CD14-positive monocyte (primary cell): ENCODE measurements at regions of chrX and their contacts with region 1.

Region 1: GRCh38 chrX:150898343-150899190 is at the start of gene CD99L2:
- DNase-seq: peak; percentile 77 to 82 (median 82)
- H3K4me3 ChIP-seq: peak within 1 kb of the TSS; percentile 66 to 91 (median 82)
- H3K4me3 Mint-ChIP-seq: peak within 1 kb of the TSS; percentile 88 to 91
- H3K27ac ChIP-seq: peak within 1 kb of the TSS; percentile 75 to 87
- H3K27ac Mint-ChIP-seq: peak within 1 kb of the TSS; percentile 81 to 93 (median 85)
- H3K4me1 ChIP-seq: peaks cover 8 to 27% of the 10 kb centered on the region in 2 donors
- H3K4me1 Mint-ChIP-seq: peaks cover 17% of the 10 kb centered on the region
- H3K27me3 ChIP-seq: no peaks in the 10 kb centered on the region
- H3K27me3 Mint-ChIP-seq: peaks cover 0 to 8% (median 0%) of the 10 kb centered on the region in 3 donors
- CTCF ChIP-seq: no peak
- polyA plus RNA-seq, gene CD99L2: 13.1 to 18.4 (median 16.7) TPM

Region 2: GRCh38 chrX:150781677-150782076 is 116.9 kb before region 1 on chrX:
- intact Hi-C with region 1: loop called in 1 of 2 experiments (anchors 10 kb)
- DNase-seq: no peak
- H3K4me3 ChIP-seq: no peak overlapping the region
- H3K4me3 Mint-ChIP-seq: no peak overlapping the region
- H3K27ac ChIP-seq: no peak overlapping the region
- H3K27ac Mint-ChIP-seq: no peak overlapping the region
- H3K4me1 ChIP-seq: peaks cover 0 to 3% of the 10 kb centered on the region in 2 donors
- H3K4me1 Mint-ChIP-seq: peaks cover 18% of the 10 kb centered on the region
- H3K27me3 ChIP-seq: no peaks in the 10 kb centered on the region
- H3K27me3 Mint-ChIP-seq: peaks cover 0 to 1% (median 0%) of the 10 kb centered on the region in 3 donors
- CTCF ChIP-seq: no peak

Region 3: DNA sequence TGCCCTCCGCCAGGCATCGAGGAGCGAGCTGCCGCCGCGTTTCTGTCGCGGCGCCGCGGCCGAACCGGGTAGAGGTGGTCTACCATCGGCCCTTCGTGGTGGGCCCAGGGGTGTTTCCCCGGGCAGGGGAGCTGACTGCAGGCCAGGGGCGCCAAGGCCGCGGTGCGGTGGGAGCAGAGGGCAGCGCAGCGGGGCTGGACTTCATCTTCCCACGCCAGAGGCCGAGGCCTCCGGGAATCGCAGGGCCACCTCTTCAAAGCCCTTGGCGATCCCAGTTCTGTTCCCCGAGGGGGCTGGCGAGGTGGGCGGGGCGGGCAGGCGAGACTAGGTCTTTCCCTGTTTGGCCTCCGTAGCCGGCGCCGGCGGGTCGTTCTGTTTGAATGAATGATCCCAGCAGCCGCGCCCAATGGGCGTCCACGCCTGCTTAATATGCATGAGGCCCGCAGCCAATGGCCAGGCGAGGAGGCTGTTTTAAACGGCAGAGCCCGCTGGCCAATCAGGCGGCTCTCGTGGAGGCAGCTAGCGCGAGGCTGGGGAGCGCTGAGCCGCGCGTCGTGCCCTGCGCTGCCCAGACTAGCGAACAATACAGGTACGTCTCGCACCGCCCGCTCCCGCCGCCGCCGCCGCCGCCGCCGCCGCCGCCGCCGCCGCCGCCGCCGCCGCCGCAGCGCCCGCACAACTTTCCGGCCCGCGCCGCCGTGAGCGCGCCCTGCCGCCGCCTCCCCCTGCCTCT is 84.4 kb after region 1 on chrX and contains the start of gene HMGB3:
- intact Hi-C with region 1: loop called in 1 of 2 experiments (anchors 10 kb)
- DNase-seq: peak; percentile 74 to 82 (median 78)
- H3K4me3 ChIP-seq: peak within 1 kb of the TSS; percentile 55 to 80 (median 68)
- H3K4me3 Mint-ChIP-seq: peak within 1 kb of the TSS; percentile 82 to 89
- H3K27ac ChIP-seq: peak within 1 kb of the TSS in 1 of 2 donors; percentile 36
- H3K27ac Mint-ChIP-seq: peak within 1 kb of the TSS in 6 of 7 donors; percentile 43 to 84 (median 74)
- H3K4me1 ChIP-seq: peaks cover 21 to 23% of the 10 kb centered on the region in 2 donors
- H3K4me1 Mint-ChIP-seq: peaks cover 19% of the 10 kb centered on the region
- H3K27me3 ChIP-seq: peaks cover 0 to 4% of the 10 kb centered on the region in 2 donors
- H3K27me3 Mint-ChIP-seq: peaks cover 0 to 4% (median 4%) of the 10 kb centered on the region in 3 donors
- CTCF ChIP-seq: no peak
- polyA plus RNA-seq, gene HMGB3: 3.0 to 6.4 (median 4.9) TPM